Caco-2 (cell line): ENCODE measurements at regions of chr11 and their contacts with region 1.

Region 1: GRCh38 chr11:2196970-2197770 is 25.6 kb upstream of the TH start:
- DNase-seq: peak; percentile 92 to 97
- H3K4me3 ChIP-seq: no peak overlapping the region
- H3K4me3 Mint-ChIP-seq: no peak overlapping the region
- H3K27ac Mint-ChIP-seq: peak overlapping the region; percentile 51
- H3K4me1 ChIP-seq: peaks cover 37% of the 10 kb centered on the region
- H3K4me1 Mint-ChIP-seq: peaks cover 31% of the 10 kb centered on the region
- H3K27me3 ChIP-seq: no peaks in the 10 kb centered on the region
- H3K27me3 Mint-ChIP-seq: peaks cover 7% of the 10 kb centered on the region
- CTCF ChIP-seq: peak; percentile 98 to 99

Region 2: DNA sequence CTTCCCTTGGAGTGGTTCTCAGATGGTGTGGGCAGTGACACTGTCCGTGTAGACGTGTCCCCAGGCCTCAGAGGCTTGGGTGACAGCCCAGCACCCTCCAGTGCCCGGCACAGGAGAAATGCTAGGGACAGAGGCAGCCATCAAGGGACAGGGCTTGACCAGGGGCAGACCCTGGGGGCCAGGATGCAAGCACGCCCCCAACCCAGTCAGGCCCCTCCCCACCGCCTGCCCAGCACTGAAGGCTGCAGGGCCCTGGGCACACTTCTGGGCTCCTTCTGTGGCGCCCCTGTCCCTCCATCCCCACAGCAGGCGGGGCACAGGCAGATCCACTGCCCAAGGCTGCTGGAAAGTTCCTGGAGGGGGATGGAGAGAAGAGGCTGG is 69.0 kb before region 1 on chr11:
- CTCF ChIA-PET with region 1: no interaction called
- POLR2A ChIA-PET with region 1: interaction called, 6 read pairs
- intact Hi-C with region 1: loop called (anchors 1 kb)
- DNase-seq: peak in 1 of 2 experiments; percentile 75
- H3K4me3 ChIP-seq: no peak overlapping the region
- H3K4me3 Mint-ChIP-seq: no peak overlapping the region
- H3K27ac Mint-ChIP-seq: no peak overlapping the region
- H3K4me1 ChIP-seq: no peaks in the 10 kb centered on the region
- H3K4me1 Mint-ChIP-seq: peaks cover 13% of the 10 kb centered on the region
- H3K27me3 ChIP-seq: no peaks in the 10 kb centered on the region
- H3K27me3 Mint-ChIP-seq: no peaks in the 10 kb centered on the region
- CTCF ChIP-seq: no peak

Region 3: DNA sequence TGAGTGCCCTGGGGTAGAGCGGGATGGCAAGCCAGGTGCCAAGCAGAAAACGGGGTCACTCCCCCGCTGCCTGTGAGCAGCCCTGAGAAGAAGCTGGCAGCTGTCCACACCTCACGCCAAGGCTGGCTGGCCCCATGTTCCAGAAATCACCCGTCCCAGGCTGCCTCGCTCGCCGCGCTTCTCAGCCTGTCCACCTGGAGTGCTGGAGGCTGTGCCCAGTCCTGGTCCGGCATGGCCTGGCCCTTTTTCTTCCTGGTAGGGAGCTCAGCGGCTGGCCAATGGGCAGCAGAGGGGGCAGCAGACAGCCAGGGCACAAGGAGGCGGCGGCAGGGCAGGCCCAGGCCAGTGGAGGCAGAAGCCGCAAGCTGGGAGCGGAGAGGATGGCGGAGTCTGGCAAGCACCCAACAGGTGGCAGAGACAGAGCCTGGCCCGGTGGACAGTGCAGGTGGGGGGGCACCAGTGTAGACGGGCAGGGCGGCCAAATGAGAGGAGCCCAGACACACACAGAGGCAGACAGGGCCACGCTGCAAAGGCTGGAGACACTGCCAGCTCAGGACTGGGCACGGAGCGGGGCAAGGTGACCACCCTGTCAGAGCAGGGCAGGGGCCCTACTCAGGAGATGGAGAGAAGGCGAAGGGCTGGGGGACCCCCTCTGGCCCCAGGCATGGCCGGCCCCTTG is 11.7 kb after region 1 on chr11:
- CTCF ChIA-PET with region 1: interaction called, 32 read pairs
- POLR2A ChIA-PET with region 1: interaction called, 26 read pairs
- intact Hi-C with region 1: loop called (anchors 1 kb)
- DNase-seq: peak; percentile 58 to 65
- H3K4me3 ChIP-seq: no peak overlapping the region
- H3K4me3 Mint-ChIP-seq: peak overlapping the region; percentile 6
- H3K27ac Mint-ChIP-seq: peak overlapping the region; percentile 75
- H3K4me1 ChIP-seq: peaks cover 82% of the 10 kb centered on the region
- H3K4me1 Mint-ChIP-seq: peaks cover 58% of the 10 kb centered on the region
- H3K27me3 ChIP-seq: no peaks in the 10 kb centered on the region
- H3K27me3 Mint-ChIP-seq: no peaks in the 10 kb centered on the region
- CTCF ChIP-seq: peak in 1 of 2 experiments; percentile 41

Region 4: DNA sequence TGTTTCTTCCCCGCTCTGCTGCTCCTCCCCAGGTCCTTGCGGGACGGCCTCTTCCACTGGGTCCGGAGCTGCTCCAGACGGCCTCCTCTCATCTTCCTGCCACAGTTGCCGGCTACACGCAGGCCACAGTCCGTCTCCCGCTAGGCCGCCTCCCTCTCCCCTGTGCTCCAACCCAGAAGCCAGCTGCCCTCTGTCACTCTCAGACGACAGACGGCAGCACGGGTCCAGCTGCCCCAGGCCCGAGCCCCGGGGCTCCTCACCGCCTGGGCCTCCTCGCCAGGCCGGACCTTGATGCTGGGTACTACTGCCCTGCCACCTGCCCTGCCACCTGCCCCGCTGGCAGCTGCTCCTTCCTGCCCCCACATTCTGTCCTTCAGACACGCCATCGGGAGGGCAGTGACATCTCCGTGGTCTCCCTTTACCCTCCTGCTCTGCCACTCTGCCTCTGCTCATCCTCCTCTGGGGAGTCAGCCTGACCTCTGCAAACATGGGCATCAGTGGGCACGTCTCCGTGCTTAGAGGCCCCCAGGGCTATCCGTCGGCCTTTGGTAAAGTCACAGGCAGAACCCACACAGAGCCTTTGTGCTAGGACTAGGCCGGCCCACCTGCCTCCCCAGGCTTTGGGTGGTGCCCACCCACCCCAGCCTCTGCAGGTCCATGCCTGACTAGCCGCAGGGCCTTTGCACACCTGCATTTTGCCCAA is 17.5 kb after region 1 on chr11:
- CTCF ChIA-PET with region 1: interaction called, 32 read pairs
- POLR2A ChIA-PET with region 1: interaction called, 26 read pairs
- intact Hi-C with region 1: loop called (anchors 1 kb)
- DNase-seq: peak in 1 of 2 experiments; percentile 73
- H3K4me3 ChIP-seq: no peak overlapping the region
- H3K4me3 Mint-ChIP-seq: no peak overlapping the region
- H3K27ac Mint-ChIP-seq: peak overlapping the region; percentile 75
- H3K4me1 ChIP-seq: peaks cover 86% of the 10 kb centered on the region
- H3K4me1 Mint-ChIP-seq: peaks cover 39% of the 10 kb centered on the region
- H3K27me3 ChIP-seq: no peaks in the 10 kb centered on the region
- H3K27me3 Mint-ChIP-seq: no peaks in the 10 kb centered on the region
- CTCF ChIP-seq: no peak

Region 5: DNA sequence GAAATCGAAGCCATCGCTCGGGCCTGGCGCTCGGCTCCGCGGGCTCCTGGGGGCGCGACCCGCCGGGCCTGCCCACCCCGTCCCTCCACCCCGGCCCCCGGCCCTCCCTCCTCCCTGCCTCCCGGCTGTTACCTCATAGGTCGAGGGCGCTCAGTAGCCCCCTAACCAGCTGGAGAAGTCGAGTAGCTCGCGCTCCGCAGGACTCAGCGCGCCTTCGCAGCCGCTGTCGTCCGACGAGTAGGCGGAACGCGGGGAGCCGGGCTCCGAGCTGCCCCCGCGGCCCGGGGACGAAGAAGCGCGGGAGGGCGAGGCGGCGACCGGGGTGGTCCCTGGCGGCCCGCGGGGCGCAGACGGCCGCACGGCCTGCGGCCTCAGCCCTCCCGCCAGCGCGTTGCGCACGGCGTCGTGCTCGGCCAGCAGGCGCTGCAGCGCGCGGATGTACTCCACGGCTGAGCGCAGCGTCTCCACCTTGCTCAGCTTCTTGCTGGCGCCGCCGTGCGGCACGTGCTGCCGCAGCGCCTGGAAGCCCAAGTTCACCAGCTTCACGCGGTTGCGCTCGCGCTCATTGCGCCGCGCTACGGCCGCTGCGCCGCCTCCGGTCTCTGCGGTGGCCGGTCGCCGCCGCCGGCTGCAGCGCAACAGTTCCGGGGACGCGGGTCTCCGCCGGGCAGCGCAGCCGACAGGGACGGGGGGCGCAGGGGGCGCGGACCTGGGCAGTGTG is 72.6 kb after region 1 on chr11:
- CTCF ChIA-PET with region 1: interaction called, 5 read pairs
- POLR2A ChIA-PET with region 1: interaction called, 26 read pairs
- intact Hi-C with region 1: loop called (anchors 1 kb)
- DNase-seq: peak; percentile 85 to 87
- H3K4me3 ChIP-seq: peak overlapping the region; percentile 76
- H3K4me3 Mint-ChIP-seq: peak overlapping the region; percentile 87
- H3K27ac Mint-ChIP-seq: peak overlapping the region; percentile 88
- H3K4me1 ChIP-seq: peaks cover 27% of the 10 kb centered on the region
- H3K4me1 Mint-ChIP-seq: peaks cover 10% of the 10 kb centered on the region
- H3K27me3 ChIP-seq: no peaks in the 10 kb centered on the region
- H3K27me3 Mint-ChIP-seq: no peaks in the 10 kb centered on the region
- CTCF ChIP-seq: peak in 1 of 2 experiments; percentile 72

Region 6: GRCh38 chr11:2420502-2421225 is 223.5 kb after region 1 on chr11:
- CTCF ChIA-PET with region 1: interaction called, 8 read pairs
- POLR2A ChIA-PET with region 1: no interaction called
- intact Hi-C with region 1: loop called (anchors 2 kb)
- DNase-seq: peak; percentile 65 to 82
- H3K4me3 ChIP-seq: no peak overlapping the region
- H3K4me3 Mint-ChIP-seq: no peak overlapping the region
- H3K27ac Mint-ChIP-seq: no peak overlapping the region
- H3K4me1 ChIP-seq: peaks cover 4% of the 10 kb centered on the region
- H3K4me1 Mint-ChIP-seq: no peaks in the 10 kb centered on the region
- H3K27me3 ChIP-seq: no peaks in the 10 kb centered on the region
- H3K27me3 Mint-ChIP-seq: no peaks in the 10 kb centered on the region
- CTCF ChIP-seq: peak; percentile 91 to 96